Mammary epithelial cell (primary cell): ENCODE measurements at regions of chr7 and their contacts with region 1.

Region 1: DNA sequence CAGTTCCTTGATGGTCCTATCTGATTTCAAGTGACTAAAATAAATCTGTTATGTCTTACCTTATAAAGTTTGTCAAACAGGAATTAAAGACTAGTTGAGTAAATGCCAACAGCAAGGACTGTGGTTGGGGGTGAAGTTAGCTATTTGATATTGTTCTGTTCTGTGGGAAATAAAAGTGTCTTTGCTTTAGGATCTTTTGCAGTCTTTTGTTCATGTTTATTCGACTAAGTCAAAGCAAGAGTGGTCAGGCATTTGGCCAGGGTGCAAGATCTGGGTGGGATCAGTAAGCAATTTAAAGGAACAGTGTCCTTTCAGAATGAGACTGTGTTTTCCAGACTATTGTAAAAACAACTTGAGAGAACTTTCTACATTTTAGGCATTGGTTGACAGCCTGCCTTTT is at the start of gene COL28A1:
- DNase-seq: no peak
- H3K4me3 ChIP-seq: no peak within 1 kb of the TSS
- H3K27ac ChIP-seq: no peak within 1 kb of the TSS
- H3K4me1 ChIP-seq: no peaks in the 10 kb centered on the region
- H3K27me3 ChIP-seq: no peaks in the 10 kb centered on the region
- CTCF ChIP-seq: no peak
- total RNA-seq, gene COL28A1: 0.16 to 0.17 TPM

Region 2: DNA sequence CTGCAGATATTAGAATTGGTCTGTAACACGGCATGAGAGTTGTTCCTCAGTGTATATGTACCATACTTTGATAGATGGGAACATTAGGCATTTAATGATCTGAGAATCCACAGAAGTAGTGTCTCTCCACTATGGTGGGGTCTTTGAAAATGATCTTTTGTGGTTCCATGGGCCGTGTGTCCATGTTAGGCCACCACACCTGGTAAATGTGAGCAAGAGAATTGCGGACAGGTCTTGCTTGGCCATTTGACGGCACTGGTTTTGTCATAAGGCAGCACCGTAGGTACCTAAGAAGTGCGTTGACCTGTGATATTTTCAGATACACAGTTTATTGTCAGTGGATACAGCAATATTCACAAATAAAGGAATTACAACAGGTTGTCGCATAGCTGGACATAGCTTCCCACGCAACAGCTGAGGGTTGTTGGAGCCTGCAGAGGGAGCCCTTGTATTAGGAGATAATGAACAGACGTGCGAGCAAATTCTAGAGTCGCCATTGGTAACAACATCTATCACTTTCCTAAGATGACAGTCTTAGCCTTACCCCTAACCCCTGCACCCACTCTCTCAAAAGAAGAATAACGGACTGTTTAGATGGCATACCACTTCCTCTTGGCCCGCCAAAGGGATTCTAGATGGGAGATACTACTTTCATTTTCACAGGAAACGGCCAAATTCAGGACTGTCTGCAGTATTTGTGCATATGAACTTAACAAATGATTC is 111.4 kb before region 1 on chr7:
- CTCF ChIA-PET with region 1: interaction called, 3 read pairs
- dilution Hi-C with region 1: no loop called
- in situ Hi-C with region 1: loop called (anchors 5 kb)
- intact Hi-C with region 1: loop called (anchors 1 kb)
- DNase-seq: peak; percentile 51
- H3K4me3 ChIP-seq: peak overlapping the region; percentile 32 to 51 (median 45)
- H3K27ac ChIP-seq: no peak overlapping the region
- H3K4me1 ChIP-seq: no peaks in the 10 kb centered on the region
- H3K27me3 ChIP-seq: no peaks in the 10 kb centered on the region
- CTCF ChIP-seq: peak; percentile 88

Region 3: DNA sequence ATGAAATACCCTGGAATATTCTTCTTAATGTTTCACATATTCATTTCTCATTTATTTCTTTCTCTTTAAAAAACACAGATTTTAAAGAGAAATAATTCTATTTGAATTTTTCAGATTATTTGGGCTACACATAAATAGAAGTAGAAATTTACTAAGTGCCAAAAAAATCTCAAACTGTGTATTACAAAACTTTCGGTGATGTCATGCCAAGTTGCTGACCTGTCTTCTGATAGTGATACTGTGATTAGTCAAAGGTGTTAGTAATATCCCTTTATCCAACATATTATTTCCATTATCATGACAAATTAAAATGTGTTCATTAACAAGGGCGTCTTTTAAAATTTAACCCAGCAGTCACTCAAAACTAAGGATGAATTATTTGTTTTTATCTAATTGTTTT is 60.1 kb before region 1 on chr7:
- CTCF ChIA-PET with region 1: no interaction called
- dilution Hi-C with region 1: no loop called
- in situ Hi-C with region 1: no loop called
- intact Hi-C with region 1: no loop called
- DNase-seq: no peak
- H3K4me3 ChIP-seq: no peak overlapping the region
- H3K27ac ChIP-seq: no peak overlapping the region
- H3K4me1 ChIP-seq: no peaks in the 10 kb centered on the region
- H3K27me3 ChIP-seq: no peaks in the 10 kb centered on the region
- CTCF ChIP-seq: no peak

Region 4: GRCh38 chr7:7489546-7489945 is 46.1 kb before region 1 on chr7:
- CTCF ChIA-PET with region 1: no interaction called
- dilution Hi-C with region 1: no loop called
- in situ Hi-C with region 1: no loop called
- intact Hi-C with region 1: no loop called
- DNase-seq: peak; percentile 14
- H3K4me3 ChIP-seq: no peak overlapping the region
- H3K27ac ChIP-seq: no peak overlapping the region
- H3K4me1 ChIP-seq: peaks cover 22% of the 10 kb centered on the region
- H3K27me3 ChIP-seq: no peaks in the 10 kb centered on the region
- CTCF ChIP-seq: no peak

Region 5: DNA sequence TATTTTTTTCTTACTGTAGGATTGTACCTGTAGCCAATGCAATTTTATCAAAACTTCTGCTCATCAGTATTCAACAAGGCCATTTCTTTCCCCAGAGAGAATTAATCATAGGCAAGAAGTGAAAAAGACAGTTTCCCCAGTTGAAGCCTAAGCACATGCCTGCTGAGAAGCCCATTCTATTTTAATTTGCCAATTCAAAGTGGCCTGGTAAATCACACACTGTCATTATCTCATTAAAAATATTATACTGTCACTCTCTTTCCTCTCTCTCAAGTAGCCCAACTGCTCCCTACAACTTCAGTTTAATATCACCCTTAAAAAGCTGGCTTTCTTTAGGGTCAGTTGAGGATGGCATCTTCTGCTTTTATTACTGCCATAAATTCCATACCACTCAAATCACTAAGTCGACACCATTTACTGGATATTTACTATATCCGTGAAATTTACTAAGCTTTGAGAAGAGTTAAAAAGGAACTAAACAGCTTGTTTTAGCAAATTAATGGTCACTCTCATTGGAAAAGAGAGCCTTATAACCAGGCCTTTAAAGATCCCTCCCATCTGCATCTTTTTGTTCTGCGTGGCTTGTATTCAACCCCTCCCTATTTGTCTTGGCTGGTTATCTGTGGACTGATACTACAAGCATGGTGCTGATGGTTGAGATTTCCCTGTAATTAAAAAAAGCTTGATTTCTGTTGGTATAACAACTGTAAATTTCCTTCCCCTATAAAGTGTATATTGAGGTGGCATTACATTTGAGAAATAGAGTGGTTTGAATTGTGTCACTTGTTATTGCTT is 30.6 kb before region 1 on chr7:
- CTCF ChIA-PET with region 1: no interaction called
- dilution Hi-C with region 1: no loop called
- in situ Hi-C with region 1: no loop called
- intact Hi-C with region 1: no loop called
- DNase-seq: no peak
- H3K4me3 ChIP-seq: no peak overlapping the region
- H3K27ac ChIP-seq: no peak overlapping the region
- H3K4me1 ChIP-seq: no peaks in the 10 kb centered on the region
- H3K27me3 ChIP-seq: no peaks in the 10 kb centered on the region
- CTCF ChIP-seq: no peak

Region 6: GRCh38 chr7:7696458-7697119 is 160.9 kb after region 1 on chr7:
- CTCF ChIA-PET with region 1: no interaction called
- dilution Hi-C with region 1: no loop called
- in situ Hi-C with region 1: no loop called
- intact Hi-C with region 1: no loop called
- DNase-seq: no peak
- H3K4me3 ChIP-seq: no peak overlapping the region
- H3K27ac ChIP-seq: no peak overlapping the region
- H3K4me1 ChIP-seq: peaks cover 11% of the 10 kb centered on the region
- H3K27me3 ChIP-seq: no peaks in the 10 kb centered on the region
- CTCF ChIP-seq: no peak